ENCODE measurements at regions of chr6 and their contacts with region 1.

Region 1: GRCh38 chr6:30533460-30534294 is 22.6 kb downstream of the GNL1 start:
- DNase-seq: peak; percentile 68
- ATAC-seq: peak; percentile 46
- H3K4me3 ChIP-seq: peak overlapping the region in 1 of 3 experiments; percentile 24; a peak in 3 of 6 replicates
- H3K27ac ChIP-seq: peak overlapping the region; percentile 19
- H3K4me1 ChIP-seq: peaks cover 53% of the 10 kb centered on the region
- H3K27me3 ChIP-seq: no peaks in the 10 kb centered on the region
- CTCF ChIP-seq: peak; percentile 7; the same call in 1 of the 2 replicates
- EP300 ChIP-seq: peak in 1 of 2 experiments; percentile 39; a peak in 1 of 4 replicates
- POLR2A ChIP-seq: no peak
- RAD21 ChIP-seq: no peak

Region 2: GRCh38 chr6:30213957-30214656 is 319.6 kb before region 1 on chr6:
- CTCF ChIA-PET with region 1: no interaction called
- POLR2A ChIA-PET with region 1: no interaction called
- in situ Hi-C with region 1: no loop called
- intact Hi-C with region 1: no loop called
- DNase-seq: peak; percentile 66
- ATAC-seq: peak; percentile 90
- H3K4me3 ChIP-seq: peak overlapping the region; percentile 87 to 99 (median 95)
- H3K27ac ChIP-seq: peak overlapping the region; percentile 93
- H3K4me1 ChIP-seq: peaks cover 48% of the 10 kb centered on the region
- H3K27me3 ChIP-seq: peaks cover 0 to 2% of the 10 kb centered on the region in 2 experiments; a peak in 1 of 5 replicates
- CTCF ChIP-seq: peak; percentile 22; the same call in 1 of the 2 replicates
- EP300 ChIP-seq: no peak
- POLR2A ChIP-seq: peak; percentile 76 to 99
- RAD21 ChIP-seq: peak; percentile 48; the same call in 1 of the 2 replicates

Region 3: GRCh38 chr6:30483677-30484279 is 49.9 kb before region 1 on chr6:
- CTCF ChIA-PET with region 1: interaction called, 72 read pairs
- POLR2A ChIA-PET with region 1: interaction called, 6 read pairs
- in situ Hi-C with region 1: no loop called
- intact Hi-C with region 1: loop called (anchors 1 kb)
- DNase-seq: peak; percentile 66
- ATAC-seq: no peak
- H3K4me3 ChIP-seq: no peak overlapping the region
- H3K27ac ChIP-seq: no peak overlapping the region
- H3K4me1 ChIP-seq: peaks cover 26% of the 10 kb centered on the region
- H3K27me3 ChIP-seq: peaks cover 0 to 29% of the 10 kb centered on the region in 2 experiments; a peak in 3 of 5 replicates
- CTCF ChIP-seq: peak; percentile 81
- EP300 ChIP-seq: no peak
- POLR2A ChIP-seq: no peak
- RAD21 ChIP-seq: peak; percentile 58; the same call in 1 of the 2 replicates

Region 4: GRCh38 chr6:30489081-30490025 is 44.3 kb before region 1 on chr6 and contains the start of gene HLA-E:
- CTCF ChIA-PET with region 1: interaction called, 72 read pairs
- POLR2A ChIA-PET with region 1: interaction called, 6 read pairs
- in situ Hi-C with region 1: no loop called
- intact Hi-C with region 1: loop called (anchors 1 kb)
- DNase-seq: peak; percentile 99
- ATAC-seq: peak; percentile 97
- H3K4me3 ChIP-seq: peak within 1 kb of the TSS; percentile 74 to 97 (median 80)
- H3K27ac ChIP-seq: peak within 1 kb of the TSS; percentile 41
- H3K4me1 ChIP-seq: peaks cover 25% of the 10 kb centered on the region
- H3K27me3 ChIP-seq: no peaks in the 10 kb centered on the region
- CTCF ChIP-seq: peak; percentile 13; the same call in 1 of the 2 replicates
- EP300 ChIP-seq: no peak
- POLR2A ChIP-seq: peak; percentile 93 to 97
- RAD21 ChIP-seq: 0 out of 2 replicates have a peak, but pooled peaks have one; percentile 10
- total RNA-seq, gene HLA-E: 21.2 and 45.2 TPM in 2 replicates

Region 5: GRCh38 chr6:30500421-30501355 is 33.0 kb before region 1 on chr6:
- CTCF ChIA-PET with region 1: no interaction called
- POLR2A ChIA-PET with region 1: no interaction called
- in situ Hi-C with region 1: no loop called
- intact Hi-C with region 1: no loop called
- DNase-seq: no peak
- ATAC-seq: peak; percentile 56
- H3K4me3 ChIP-seq: no peak overlapping the region; a peak in 1 of 6 replicates
- H3K27ac ChIP-seq: no peak overlapping the region
- H3K4me1 ChIP-seq: peaks cover 13% of the 10 kb centered on the region
- H3K27me3 ChIP-seq: peaks cover 0 to 5% of the 10 kb centered on the region in 2 experiments; a peak in 2 of 5 replicates
- CTCF ChIP-seq: no peak
- EP300 ChIP-seq: no peak
- POLR2A ChIP-seq: no peak
- RAD21 ChIP-seq: no peak

Region 6: DNA sequence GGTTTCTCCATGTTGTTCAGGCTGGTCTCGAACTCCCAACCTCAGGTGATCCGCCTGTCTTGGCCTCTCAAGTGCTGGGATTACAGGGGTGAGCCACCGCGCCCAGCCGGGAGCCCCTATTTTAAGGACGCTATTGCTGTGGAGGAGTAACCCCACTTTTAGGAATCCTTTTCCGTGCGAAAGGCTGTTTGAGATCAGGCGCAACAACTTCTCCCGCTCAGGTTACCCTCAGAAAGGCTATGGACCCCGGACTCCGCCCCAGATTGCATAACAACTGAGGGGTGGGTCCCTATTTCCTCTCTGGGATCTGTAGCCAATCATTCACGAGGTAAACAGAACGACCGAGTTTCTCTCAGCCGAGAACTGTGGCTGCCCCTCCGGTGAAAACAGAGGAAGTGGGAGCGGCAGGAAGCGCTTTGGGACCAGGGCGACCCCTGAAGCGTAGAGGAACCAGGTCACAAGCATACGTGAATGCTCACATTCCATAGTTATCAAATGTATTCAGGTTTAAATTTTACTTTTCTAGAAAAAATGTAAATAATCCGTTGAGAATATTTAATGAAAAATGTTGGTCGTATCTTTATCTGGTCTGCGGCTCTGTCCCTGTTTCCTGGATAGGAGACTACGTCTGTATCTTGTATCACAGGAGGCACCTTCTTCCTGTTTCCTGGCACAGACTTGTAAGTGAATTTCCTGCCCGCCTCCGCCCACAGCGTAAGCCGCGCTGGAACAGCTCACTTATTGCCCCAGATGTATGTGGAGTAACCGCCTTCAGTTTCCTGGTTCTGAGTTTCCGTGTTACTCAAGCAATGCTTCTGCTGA is 17.5 kb before region 1 on chr6:
- CTCF ChIA-PET with region 1: no interaction called
- POLR2A ChIA-PET with region 1: interaction called, 12 read pairs
- in situ Hi-C with region 1: no loop called
- intact Hi-C with region 1: loop called (anchors 1 kb)
- DNase-seq: peak; percentile 95
- ATAC-seq: peak; percentile 94
- H3K4me3 ChIP-seq: peak overlapping the region; percentile 51 to 71 (median 67)
- H3K27ac ChIP-seq: peak overlapping the region; percentile 88
- H3K4me1 ChIP-seq: peaks cover 31% of the 10 kb centered on the region
- H3K27me3 ChIP-seq: no peaks in the 10 kb centered on the region; a peak in 1 of 5 replicates
- CTCF ChIP-seq: no peak; the same call in 1 of the 2 replicates
- EP300 ChIP-seq: no peak; a peak in 1 of 4 replicates
- POLR2A ChIP-seq: peak; percentile 78 to 89
- RAD21 ChIP-seq: no peak